ENCODE measurements at regions of chr11 and their contacts with region 1.

Region 1: DNA sequence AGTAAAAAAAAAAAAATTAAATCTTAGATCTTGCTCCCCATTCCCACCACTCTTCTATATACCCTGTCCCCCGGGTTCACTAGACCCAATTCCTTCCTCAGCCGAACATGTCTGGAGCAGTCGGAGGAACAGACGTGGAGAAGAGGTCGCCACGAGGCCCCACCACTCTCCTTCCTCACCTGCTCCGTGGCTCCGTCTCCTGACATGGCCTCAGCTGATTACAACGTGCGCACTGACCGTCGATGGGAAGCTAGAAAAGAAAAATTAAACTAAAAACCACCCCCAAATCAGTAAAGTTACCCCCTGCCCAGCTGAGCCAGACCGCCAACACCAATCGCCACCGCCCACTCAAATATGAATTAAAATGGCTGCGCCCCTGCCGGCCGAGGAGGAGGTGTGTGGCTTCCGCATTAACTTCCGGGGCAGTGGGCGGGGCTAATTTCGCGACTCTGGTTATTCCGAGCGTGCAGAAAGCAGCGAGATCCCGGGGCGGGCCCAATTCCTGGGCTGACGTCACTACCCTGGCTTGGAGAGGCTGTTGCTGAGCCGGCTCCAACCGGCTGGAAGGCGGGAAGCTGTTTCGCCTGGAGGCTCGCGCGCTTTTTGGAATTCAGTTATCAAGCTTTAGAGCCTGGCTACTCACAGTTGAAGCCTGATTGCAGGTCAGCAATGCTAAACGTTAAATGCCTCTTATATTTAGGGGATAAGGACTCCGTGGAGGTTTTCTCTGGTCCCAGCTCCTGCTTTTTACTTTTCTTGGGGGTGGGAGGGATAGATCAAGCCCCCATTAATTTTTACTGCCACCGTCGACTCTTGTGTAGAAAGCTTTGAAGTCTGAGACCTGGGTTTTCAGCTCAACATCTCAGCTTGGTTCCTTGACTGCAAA is at the start of gene CSTF3:
- DNase-seq: peak; percentile 100
- H3K4me3 Mint-ChIP-seq: peak within 1 kb of the TSS; percentile 87
- H3K27ac Mint-ChIP-seq: peak within 1 kb of the TSS; percentile 95
- H3K4me1 Mint-ChIP-seq: peaks cover 28% of the 10 kb centered on the region
- H3K27me3 Mint-ChIP-seq: no peaks in the 10 kb centered on the region
- CTCF ChIP-seq: peak; percentile 31
- total RNA-seq, gene CSTF3: 51.1 and 55.9 TPM in 2 replicates

Region 2: DNA sequence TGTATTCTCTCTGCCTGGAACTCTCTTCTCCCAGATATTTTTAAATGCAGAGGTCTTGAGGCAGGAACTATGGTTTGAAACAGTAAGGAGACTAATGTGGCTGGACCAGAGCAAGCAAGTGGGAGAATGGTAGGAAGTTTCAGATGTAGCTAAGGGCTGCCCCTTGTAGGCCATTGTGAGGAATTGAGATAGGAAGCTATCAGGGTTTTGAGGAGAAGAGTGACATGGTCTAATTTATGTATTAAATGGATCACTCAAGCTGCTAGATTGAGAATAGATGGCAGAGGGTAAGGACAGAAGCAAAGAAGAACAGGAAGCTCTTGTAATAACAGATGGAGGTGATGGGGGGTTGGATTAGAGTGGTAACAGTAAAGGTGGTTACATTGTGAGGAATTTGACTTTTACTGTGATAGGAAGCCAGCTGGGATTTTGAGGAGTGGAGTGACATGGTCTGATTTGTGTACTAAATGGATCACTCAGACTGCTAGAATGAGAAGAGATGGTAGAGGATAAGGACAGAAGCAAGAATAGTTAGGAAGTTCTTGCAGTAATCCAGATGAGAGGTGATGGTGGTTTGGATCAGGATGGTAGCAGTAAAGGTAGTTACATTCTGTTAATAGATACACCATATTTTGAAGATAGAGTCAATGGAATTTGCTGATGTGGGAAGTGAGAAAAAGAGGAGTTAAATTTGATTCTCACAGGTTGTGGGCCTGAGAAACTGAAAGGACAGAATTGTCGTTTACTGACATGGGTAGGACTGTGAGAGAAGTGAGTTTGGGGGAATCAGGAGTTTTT is 158.9 kb after region 1 on chr11:
- CTCF ChIA-PET with region 1: interaction called, 4 read pairs
- intact Hi-C with region 1: loop called (anchors 2 kb)
- DNase-seq: no peak
- H3K4me3 Mint-ChIP-seq: no peak overlapping the region
- H3K27ac Mint-ChIP-seq: no peak overlapping the region
- H3K4me1 Mint-ChIP-seq: no peaks in the 10 kb centered on the region
- H3K27me3 Mint-ChIP-seq: no peaks in the 10 kb centered on the region
- CTCF ChIP-seq: no peak

Region 3: DNA sequence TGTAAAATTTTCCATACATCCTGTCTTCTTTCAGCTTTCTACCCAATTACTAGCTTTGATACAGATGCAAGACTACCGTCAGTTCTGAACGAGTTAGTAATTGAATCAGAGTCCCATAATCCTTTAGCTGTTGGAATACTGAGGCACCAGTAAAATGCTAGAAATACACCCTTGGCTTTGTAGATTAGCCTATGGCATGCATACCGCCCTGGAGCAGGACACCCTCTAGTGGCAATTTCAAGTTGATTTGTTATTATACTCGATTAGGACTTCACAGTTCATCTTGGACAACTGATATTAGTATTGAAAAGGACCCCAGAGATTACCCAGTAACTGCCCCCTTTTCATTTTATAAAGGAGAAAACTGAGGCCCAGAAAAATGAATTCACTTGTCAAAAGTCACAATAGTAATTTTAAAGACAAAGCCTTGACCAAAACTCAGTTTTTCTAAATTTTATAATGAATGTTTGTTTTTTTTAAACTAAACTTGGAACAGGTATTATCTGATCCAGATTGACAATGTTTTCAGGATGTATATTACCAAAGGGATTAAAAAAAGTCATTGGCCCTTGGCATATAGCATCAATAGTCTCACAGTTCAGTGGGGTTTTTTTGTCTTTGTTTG is 168.5 kb after region 1 on chr11:
- CTCF ChIA-PET with region 1: interaction called, 7 read pairs
- intact Hi-C with region 1: loop called (anchors 1 kb)
- DNase-seq: peak; percentile 56
- H3K4me3 Mint-ChIP-seq: no peak overlapping the region
- H3K27ac Mint-ChIP-seq: no peak overlapping the region
- H3K4me1 Mint-ChIP-seq: no peaks in the 10 kb centered on the region
- H3K27me3 Mint-ChIP-seq: no peaks in the 10 kb centered on the region
- CTCF ChIP-seq: peak; percentile 61